B cell (primary cell): ENCODE measurements at regions of chr2 and their contacts with region 1.

Region 1: DNA sequence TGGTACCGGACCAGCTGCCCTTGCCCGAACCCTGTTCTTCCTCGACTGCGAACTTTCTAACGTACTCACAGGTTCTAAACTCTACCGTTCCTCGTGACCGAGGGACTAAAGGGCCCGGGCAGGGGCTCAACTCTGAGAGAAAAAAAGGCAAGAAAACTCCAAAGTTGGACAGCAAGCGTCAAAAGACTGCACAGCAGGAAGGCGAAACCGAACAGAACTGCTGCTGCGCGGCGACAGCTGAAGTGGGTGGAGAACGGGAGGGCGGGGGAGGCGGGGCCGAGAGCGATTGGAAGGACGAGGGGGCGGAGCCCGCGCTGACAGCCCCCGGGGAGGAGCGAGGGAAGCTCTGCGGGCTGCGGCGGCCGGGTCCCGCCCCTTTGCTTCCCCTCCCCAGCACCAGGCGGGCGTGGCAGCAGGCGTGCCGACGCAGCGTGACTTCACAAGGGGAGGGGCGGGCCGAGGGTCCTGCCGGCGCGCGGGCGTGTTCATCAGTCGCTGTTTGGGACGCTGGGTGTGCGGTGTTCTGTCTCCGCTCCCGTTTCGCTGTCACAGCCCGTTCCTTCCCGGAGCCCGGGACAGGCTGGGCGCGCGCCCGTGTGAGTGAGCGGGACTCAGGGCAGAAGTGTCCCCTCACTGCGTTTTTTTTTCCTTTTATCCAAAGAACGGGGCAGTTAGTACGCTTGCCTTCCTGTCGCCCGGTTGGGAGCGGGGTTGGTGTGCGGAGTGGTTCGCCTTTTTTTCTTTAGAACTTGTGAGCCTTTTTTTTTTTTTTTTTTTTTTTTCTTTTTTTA is at the start of gene NABP1:
- DNase-seq: peak; percentile 99
- ATAC-seq: peak; percentile 89
- H3K4me3 ChIP-seq: peak within 1 kb of the TSS; percentile 82 to 97 (median 86)
- H3K4me3 Mint-ChIP-seq: peak within 1 kb of the TSS; percentile 99
- H3K27ac ChIP-seq: peak within 1 kb of the TSS; percentile 91 to 95
- H3K27ac Mint-ChIP-seq: peak within 1 kb of the TSS; percentile 100
- H3K4me1 ChIP-seq: peaks cover 44 to 49% of the 10 kb centered on the region in 2 donors
- H3K4me1 Mint-ChIP-seq: peaks cover 51% of the 10 kb centered on the region
- H3K27me3 ChIP-seq: no peaks in the 10 kb centered on the region
- H3K27me3 Mint-ChIP-seq: no peaks in the 10 kb centered on the region
- CTCF ChIP-seq: no peak
- total RNA-seq, gene NABP1: 56.4 and 58.0 TPM in 2 replicates

Region 2: DNA sequence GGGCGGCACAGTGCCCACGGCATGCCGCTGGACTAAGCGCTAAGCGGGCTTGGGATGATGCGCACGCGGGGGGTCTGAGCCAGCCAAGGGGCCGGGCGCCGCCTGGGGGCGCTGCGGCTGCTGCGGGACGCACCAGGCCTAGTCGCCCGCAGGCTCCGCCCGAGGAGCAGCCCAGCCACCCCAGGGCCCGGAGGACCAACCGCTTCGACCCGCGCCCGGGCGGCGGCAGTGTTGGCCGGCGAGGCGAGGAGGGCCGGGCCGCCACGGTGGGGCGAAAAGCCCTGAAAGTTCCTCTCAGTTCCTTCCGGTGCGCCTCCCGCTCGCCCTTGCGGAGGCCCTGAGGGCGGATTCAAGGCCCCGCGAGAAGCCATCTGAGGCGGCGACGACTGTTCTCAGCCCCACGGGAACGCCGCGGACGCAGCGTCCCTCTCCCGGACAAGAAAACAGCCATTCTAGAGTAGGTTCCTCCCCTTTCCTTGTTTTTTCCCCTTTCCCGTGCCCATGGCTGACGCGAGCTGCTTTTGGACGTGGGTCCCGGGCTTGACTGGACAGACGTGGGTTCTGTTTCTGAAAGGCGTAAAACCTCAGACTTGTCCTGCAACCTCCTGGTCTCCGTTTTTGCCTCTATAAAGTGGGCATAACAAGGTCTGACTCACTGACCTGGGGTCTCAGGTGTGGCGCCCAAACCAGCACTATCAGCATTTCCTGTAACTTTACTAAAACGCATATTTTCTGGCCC is 2003.3 kb before region 1 on chr2 and contains the start of gene ANKAR:
- CTCF ChIA-PET with region 1: no interaction called
- POLR2A ChIA-PET with region 1: no interaction called
- intact Hi-C with region 1: loop called (anchors 10 kb)
- DNase-seq: peak; percentile 94
- ATAC-seq: peak; percentile 97
- H3K4me3 ChIP-seq: peak within 1 kb of the TSS; percentile 72 to 92 (median 85)
- H3K4me3 Mint-ChIP-seq: peak within 1 kb of the TSS; percentile 97
- H3K27ac ChIP-seq: peak within 1 kb of the TSS; percentile 93 to 98
- H3K27ac Mint-ChIP-seq: peak within 1 kb of the TSS; percentile 99
- H3K4me1 ChIP-seq: peaks cover 17 to 26% of the 10 kb centered on the region in 2 donors
- H3K4me1 Mint-ChIP-seq: peaks cover 38% of the 10 kb centered on the region
- H3K27me3 ChIP-seq: no peaks in the 10 kb centered on the region
- H3K27me3 Mint-ChIP-seq: no peaks in the 10 kb centered on the region
- CTCF ChIP-seq: peak; percentile 96
- total RNA-seq, gene ANKAR: 23.4 and 24.8 TPM in 2 replicates

Region 3: DNA sequence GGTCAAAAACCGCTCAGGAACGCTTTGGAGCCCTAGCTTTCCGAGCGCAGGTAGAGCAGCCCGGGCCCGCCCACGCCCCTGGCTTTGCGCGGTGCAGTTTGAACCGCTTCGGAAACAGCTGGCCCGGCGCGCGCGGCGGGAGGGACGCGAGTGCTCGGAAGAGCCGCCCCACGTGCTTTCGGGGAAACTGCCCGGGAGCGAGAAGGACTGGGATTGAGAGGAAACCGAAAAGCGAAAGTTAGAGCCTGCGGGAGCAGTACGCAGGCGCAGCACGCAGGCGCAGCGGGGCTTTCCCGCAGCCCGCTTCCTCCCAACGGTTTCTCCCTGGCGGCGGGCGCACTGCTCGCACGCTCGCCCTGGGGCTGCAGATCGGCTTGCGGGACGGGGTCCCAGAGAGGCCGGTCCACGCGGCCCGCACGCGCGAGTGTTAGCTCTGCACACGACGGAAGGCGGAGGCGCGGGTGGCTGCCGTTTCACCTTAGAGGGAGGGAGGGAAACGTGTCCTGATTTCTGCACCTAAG is 657.6 kb before region 1 on chr2:
- CTCF ChIA-PET with region 1: no interaction called
- POLR2A ChIA-PET with region 1: no interaction called
- intact Hi-C with region 1: loop called (anchors 2 kb)
- DNase-seq: peak; percentile 98
- ATAC-seq: peak; percentile 90
- H3K4me3 ChIP-seq: peak overlapping the region; percentile 76 to 94 (median 83)
- H3K4me3 Mint-ChIP-seq: no peak overlapping the region
- H3K27ac ChIP-seq: peak overlapping the region; percentile 84 to 91
- H3K27ac Mint-ChIP-seq: no peak overlapping the region
- H3K4me1 ChIP-seq: peaks cover 16 to 22% of the 10 kb centered on the region in 2 donors
- H3K4me1 Mint-ChIP-seq: peaks cover 9% of the 10 kb centered on the region
- H3K27me3 ChIP-seq: no peaks in the 10 kb centered on the region
- H3K27me3 Mint-ChIP-seq: no peaks in the 10 kb centered on the region
- CTCF ChIP-seq: peak; percentile 17

Region 4: DNA sequence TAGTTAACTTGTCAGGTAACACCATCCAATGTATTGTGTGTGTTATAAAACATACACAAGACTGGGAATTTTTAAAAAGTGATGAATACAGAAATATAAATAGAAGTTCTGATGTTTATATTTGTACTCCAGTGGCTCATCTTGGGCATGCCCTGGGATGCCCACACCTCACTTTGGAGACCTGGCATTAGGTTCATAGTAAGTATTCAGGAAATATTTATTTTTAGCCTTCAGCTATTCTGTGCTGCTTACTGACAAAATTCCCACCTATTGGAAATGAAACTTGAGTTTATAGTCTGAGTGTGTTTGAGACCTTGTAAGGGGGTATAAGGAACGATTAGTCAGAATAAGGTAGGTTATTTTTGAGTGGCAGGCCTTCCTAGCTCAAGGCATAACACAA is 365.2 kb before region 1 on chr2:
- CTCF ChIA-PET with region 1: no interaction called
- POLR2A ChIA-PET with region 1: interaction called, 12 read pairs
- intact Hi-C with region 1: no loop called
- DNase-seq: no peak
- ATAC-seq: no peak
- H3K4me3 ChIP-seq: no peak overlapping the region
- H3K4me3 Mint-ChIP-seq: no peak overlapping the region
- H3K27ac ChIP-seq: no peak overlapping the region
- H3K27ac Mint-ChIP-seq: no peak overlapping the region
- H3K4me1 ChIP-seq: peaks cover 30 to 33% of the 10 kb centered on the region in 2 donors
- H3K4me1 Mint-ChIP-seq: peaks cover 33% of the 10 kb centered on the region
- H3K27me3 ChIP-seq: no peaks in the 10 kb centered on the region
- H3K27me3 Mint-ChIP-seq: no peaks in the 10 kb centered on the region
- CTCF ChIP-seq: no peak

Region 5: GRCh38 chr2:191617575-191617974 is 60.3 kb before region 1 on chr2:
- CTCF ChIA-PET with region 1: interaction called, 11 read pairs
- POLR2A ChIA-PET with region 1: interaction called, 19 read pairs
- intact Hi-C with region 1: loop called (anchors 1 kb)
- DNase-seq: peak; percentile 88
- ATAC-seq: peak; percentile 95
- H3K4me3 ChIP-seq: peak overlapping the region in 1 of 5 experiments; percentile 2
- H3K4me3 Mint-ChIP-seq: peak overlapping the region; percentile 62
- H3K27ac ChIP-seq: peak overlapping the region; percentile 77 to 86
- H3K27ac Mint-ChIP-seq: peak overlapping the region; percentile 88
- H3K4me1 ChIP-seq: peaks cover 23 to 29% of the 10 kb centered on the region in 2 donors
- H3K4me1 Mint-ChIP-seq: peaks cover 52% of the 10 kb centered on the region
- H3K27me3 ChIP-seq: no peaks in the 10 kb centered on the region
- H3K27me3 Mint-ChIP-seq: no peaks in the 10 kb centered on the region
- CTCF ChIP-seq: no peak